ENCODE measurements at regions of chr2 and their contacts with region 1.

Region 1: GRCh38 chr2:238060542-238061314 is at the start of gene SCLY:
- DNase-seq: peak; percentile 97
- H3K4me3 Mint-ChIP-seq: peak within 1 kb of the TSS; percentile 82
- H3K27ac Mint-ChIP-seq: peak within 1 kb of the TSS; percentile 91
- H3K4me1 Mint-ChIP-seq: peaks cover 15% of the 10 kb centered on the region
- H3K27me3 Mint-ChIP-seq: no peaks in the 10 kb centered on the region
- CTCF ChIP-seq: no peak
- total RNA-seq, gene SCLY: 40.1 and 40.4 TPM in 2 replicates

Region 2: GRCh38 chr2:237858294-237859081 is 202.2 kb before region 1 on chr2:
- CTCF ChIA-PET with region 1: no interaction called
- POLR2A ChIA-PET with region 1: interaction called, 7 read pairs
- intact Hi-C with region 1: loop called (anchors 1 kb)
- DNase-seq: peak; percentile 84
- H3K4me3 Mint-ChIP-seq: peak overlapping the region; percentile 43
- H3K27ac Mint-ChIP-seq: no peak overlapping the region
- H3K4me1 Mint-ChIP-seq: peaks cover 8% of the 10 kb centered on the region
- H3K27me3 Mint-ChIP-seq: no peaks in the 10 kb centered on the region
- CTCF ChIP-seq: peak; percentile 81

Region 3: DNA sequence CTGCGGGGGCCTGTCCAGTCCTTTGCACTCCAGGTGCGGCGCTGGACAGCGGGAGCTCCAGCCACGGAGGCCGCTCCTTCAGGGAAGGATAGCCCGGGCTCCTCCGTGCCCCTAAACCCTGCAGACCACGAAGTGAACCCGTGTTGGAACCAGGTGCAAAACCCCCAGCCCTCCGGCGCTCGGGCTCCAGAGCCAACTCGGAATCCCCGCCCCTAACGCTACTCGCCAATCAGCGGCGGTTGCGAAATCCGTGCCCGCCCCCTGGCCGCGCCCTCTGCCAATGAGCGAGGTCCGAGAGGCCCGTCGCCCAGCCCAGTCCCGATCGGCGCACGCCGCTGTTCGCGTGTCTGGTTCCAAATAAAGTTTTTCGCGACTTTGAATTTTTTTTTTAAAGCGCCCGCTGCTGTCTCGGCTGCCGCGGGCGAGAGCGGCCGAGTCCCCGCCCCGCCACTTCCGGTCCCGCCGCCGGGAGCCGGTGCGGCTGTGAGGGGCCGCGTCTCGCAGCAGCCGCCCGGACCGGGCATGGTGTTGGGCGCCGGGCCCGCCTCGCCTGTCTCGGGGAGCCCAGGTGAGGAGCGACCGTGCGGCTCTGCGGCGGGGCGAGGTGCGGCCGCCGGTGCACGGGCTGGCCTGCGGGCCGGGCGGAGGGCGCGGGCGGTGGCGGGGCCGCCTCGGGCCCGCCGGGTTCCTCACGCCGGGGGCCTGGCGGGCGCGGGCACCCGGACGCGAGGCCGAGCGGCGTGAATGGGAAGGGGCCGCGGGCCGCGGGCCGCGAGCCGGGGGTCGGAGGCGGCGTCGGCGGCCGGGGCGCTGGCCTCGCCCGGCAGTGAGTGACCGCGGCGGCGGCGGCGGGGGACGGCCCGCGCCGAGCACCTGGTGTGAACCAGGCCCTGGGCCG is 93.9 kb before region 1 on chr2 and contains the start of gene UBE2F:
- CTCF ChIA-PET with region 1: interaction called, 3 read pairs
- POLR2A ChIA-PET with region 1: interaction called, 13 read pairs
- intact Hi-C with region 1: loop called (anchors 5 kb)
- DNase-seq: peak; percentile 96
- H3K4me3 Mint-ChIP-seq: peak within 1 kb of the TSS; percentile 83
- H3K27ac Mint-ChIP-seq: peak within 1 kb of the TSS; percentile 74
- H3K4me1 Mint-ChIP-seq: peaks cover 32% of the 10 kb centered on the region
- H3K27me3 Mint-ChIP-seq: no peaks in the 10 kb centered on the region
- CTCF ChIP-seq: no peak
- total RNA-seq, gene UBE2F: 116 and 125 TPM in 2 replicates

Region 4: DNA sequence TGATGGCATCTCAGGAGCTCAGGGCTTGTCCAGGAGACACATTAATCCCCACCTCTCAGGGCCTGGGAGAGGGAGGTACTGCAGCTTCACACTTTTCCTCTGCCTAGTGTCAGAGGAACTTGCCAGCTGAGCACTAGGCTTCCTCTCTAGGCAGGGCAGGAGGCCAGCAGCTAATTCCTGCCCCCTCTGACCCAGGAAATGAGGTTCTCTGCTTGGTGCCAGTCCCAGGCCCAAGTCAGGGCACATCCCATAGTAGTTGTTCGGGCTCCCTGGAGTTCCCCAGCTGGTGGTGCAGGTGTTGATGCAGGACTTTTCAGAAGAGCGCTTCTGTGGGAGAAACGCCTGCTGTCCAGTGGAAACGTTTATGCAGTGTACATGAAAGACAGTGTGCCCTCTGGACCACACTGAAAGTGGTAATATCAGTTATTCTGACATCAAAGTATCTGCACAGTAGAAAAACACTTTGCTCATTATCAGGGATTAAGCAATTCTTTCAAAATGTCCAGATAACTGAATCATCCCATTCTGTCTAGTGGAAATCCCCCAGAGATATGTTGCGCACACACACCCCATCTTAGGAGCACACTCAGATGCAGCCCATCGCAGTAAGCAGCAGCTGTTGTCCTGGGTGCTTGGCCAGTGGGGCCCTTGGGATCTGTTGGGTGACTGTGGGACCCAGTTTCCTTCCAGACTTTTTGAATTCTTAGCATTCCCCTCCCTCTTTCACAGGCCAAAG is 17.7 kb before region 1 on chr2:
- CTCF ChIA-PET with region 1: interaction called, 3 read pairs
- POLR2A ChIA-PET with region 1: interaction called, 13 read pairs
- intact Hi-C with region 1: no loop called
- DNase-seq: no peak
- H3K4me3 Mint-ChIP-seq: no peak overlapping the region
- H3K27ac Mint-ChIP-seq: no peak overlapping the region
- H3K4me1 Mint-ChIP-seq: no peaks in the 10 kb centered on the region
- H3K27me3 Mint-ChIP-seq: no peaks in the 10 kb centered on the region
- CTCF ChIP-seq: no peak

Region 5: GRCh38 chr2:238092486-238093035 is 31.8 kb after region 1 on chr2:
- CTCF ChIA-PET with region 1: no interaction called
- POLR2A ChIA-PET with region 1: no interaction called
- intact Hi-C with region 1: no loop called
- DNase-seq: no peak
- H3K4me3 Mint-ChIP-seq: no peak overlapping the region
- H3K27ac Mint-ChIP-seq: no peak overlapping the region
- H3K4me1 Mint-ChIP-seq: no peaks in the 10 kb centered on the region
- H3K27me3 Mint-ChIP-seq: no peaks in the 10 kb centered on the region
- CTCF ChIP-seq: no peak

Region 6: DNA sequence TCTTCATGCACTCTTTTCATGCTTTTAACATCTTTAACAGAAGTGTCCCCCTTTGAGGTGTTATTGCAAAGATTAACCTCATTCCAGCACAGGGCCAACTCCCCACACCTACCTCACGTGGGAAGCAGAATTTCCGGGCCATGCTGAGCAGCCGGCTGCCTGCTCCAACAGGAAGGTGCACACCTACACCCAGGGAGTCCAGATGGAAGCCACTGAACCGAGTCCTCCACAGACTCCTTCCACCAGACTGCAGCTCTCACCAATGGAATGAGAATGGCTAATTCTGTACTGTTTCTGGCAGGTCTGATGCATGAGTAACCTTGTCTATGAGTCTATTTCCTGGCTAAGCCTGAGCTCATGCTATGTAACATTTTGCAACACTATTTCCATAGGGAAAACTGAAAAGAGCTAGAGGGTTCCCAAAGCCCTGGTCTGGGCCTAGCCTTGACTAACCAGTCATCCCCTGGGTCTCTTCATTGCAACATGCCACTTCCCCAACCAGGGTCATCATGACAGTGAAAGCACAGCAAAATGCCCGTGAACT is 109.1 kb after region 1 on chr2:
- CTCF ChIA-PET with region 1: interaction called, 3 read pairs
- POLR2A ChIA-PET with region 1: interaction called, 14 read pairs
- intact Hi-C with region 1: no loop called
- DNase-seq: peak; percentile 96
- H3K4me3 Mint-ChIP-seq: peak overlapping the region; percentile 41
- H3K27ac Mint-ChIP-seq: peak overlapping the region; percentile 94
- H3K4me1 Mint-ChIP-seq: peaks cover 25% of the 10 kb centered on the region
- H3K27me3 Mint-ChIP-seq: no peaks in the 10 kb centered on the region
- CTCF ChIP-seq: no peak

Region 7: GRCh38 chr2:238239872-238240751 is 179.4 kb after region 1 on chr2 and contains the start of gene HES6:
- CTCF ChIA-PET with region 1: no interaction called
- POLR2A ChIA-PET with region 1: interaction called, 5 read pairs
- intact Hi-C with region 1: loop called (anchors 2 kb)
- DNase-seq: peak; percentile 86
- H3K4me3 Mint-ChIP-seq: peak within 1 kb of the TSS; percentile 80
- H3K27ac Mint-ChIP-seq: no peak within 1 kb of the TSS
- H3K4me1 Mint-ChIP-seq: peaks cover 5% of the 10 kb centered on the region
- H3K27me3 Mint-ChIP-seq: no peaks in the 10 kb centered on the region
- CTCF ChIP-seq: no peak
- total RNA-seq, gene HES6: 16.8 and 19.7 TPM in 2 replicates

Measured in MCF 10A (cell line).